ENCODE measurements at regions of chr3 and their contacts with region 1.

Region 1: GRCh38 chr3:5026331-5027218 is 47.3 kb downstream of the BHLHE40 start:
- DNase-seq: peak; percentile 83
- ATAC-seq: peak; percentile 60
- H3K4me3 Mint-ChIP-seq: peak overlapping the region; percentile 67
- H3K27ac Mint-ChIP-seq: peak overlapping the region; percentile 86
- H3K4me1 Mint-ChIP-seq: peaks cover 53% of the 10 kb centered on the region
- H3K27me3 Mint-ChIP-seq: peaks cover 9% of the 10 kb centered on the region
- CTCF ChIP-seq: peak; percentile 39

Region 2: GRCh38 chr3:5016218-5017161 is 10.1 kb before region 1 on chr3:
- CTCF ChIA-PET with region 1: interaction called, 18 read pairs
- POLR2A ChIA-PET with region 1: interaction called, 20 read pairs
- intact Hi-C with region 1: no loop called
- DNase-seq: peak; percentile 60
- ATAC-seq: peak; percentile 54
- H3K4me3 Mint-ChIP-seq: no peak overlapping the region
- H3K27ac Mint-ChIP-seq: peak overlapping the region; percentile 11
- H3K4me1 Mint-ChIP-seq: peaks cover 75% of the 10 kb centered on the region
- H3K27me3 Mint-ChIP-seq: peaks cover 2% of the 10 kb centered on the region
- CTCF ChIP-seq: no peak

Region 3: GRCh38 chr3:5041315-5041714 is 14.7 kb after region 1 on chr3:
- CTCF ChIA-PET with region 1: interaction called, 16 read pairs
- POLR2A ChIA-PET with region 1: interaction called, 4 read pairs
- intact Hi-C with region 1: no loop called
- DNase-seq: no peak
- ATAC-seq: no peak
- H3K4me3 Mint-ChIP-seq: no peak overlapping the region
- H3K27ac Mint-ChIP-seq: no peak overlapping the region
- H3K4me1 Mint-ChIP-seq: peaks cover 26% of the 10 kb centered on the region
- H3K27me3 Mint-ChIP-seq: peaks cover 1% of the 10 kb centered on the region
- CTCF ChIP-seq: no peak